ENCODE measurements at regions of chr17 and their contacts with region 1.

Region 1: DNA sequence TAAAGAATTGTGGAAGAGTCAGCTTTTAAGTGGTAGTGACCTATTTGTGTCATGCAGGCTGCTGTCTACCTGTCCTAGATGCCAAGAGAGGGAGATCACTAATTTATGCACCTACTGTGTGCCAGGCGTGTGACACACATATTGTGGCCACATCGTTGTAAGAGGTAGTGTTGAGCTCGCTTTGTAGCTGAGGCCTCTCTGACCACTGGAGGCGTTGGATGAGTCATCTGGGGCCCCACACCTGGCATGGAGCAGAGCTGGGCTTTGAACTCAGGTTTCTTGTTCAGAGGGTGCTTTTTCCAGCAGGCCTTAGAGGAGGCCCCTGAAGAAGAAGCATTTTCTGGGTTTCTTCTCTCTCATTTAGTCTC is 52.3 kb upstream of the LGALS9 start:
- DNase-seq: peak; percentile 57
- ATAC-seq: peak; percentile 94
- H3K4me3 ChIP-seq: no peak overlapping the region
- H3K27ac ChIP-seq: peak overlapping the region; percentile 67
- H3K4me1 ChIP-seq: peaks cover 30% of the 10 kb centered on the region
- H3K27me3 ChIP-seq: no peaks in the 10 kb centered on the region
- CTCF ChIP-seq: peak in 2 of 3 experiments; percentile 13 to 23; a peak in 2 of 6 replicates
- EP300 ChIP-seq: peak; percentile 53 to 82; a peak in 3 of 4 replicates
- POLR2A ChIP-seq: no peak
- RAD21 ChIP-seq: 0 out of 2 replicates have a peak, but pooled peaks have one; percentile 7

Region 2: GRCh38 chr17:27473748-27474609 is 104.7 kb before region 1 on chr17:
- CTCF ChIA-PET with region 1: interaction called, 4 read pairs
- POLR2A ChIA-PET with region 1: interaction called, 3 read pairs
- RAD21 ChIA-PET with region 1: interaction called, 15 read pairs
- SMC1A ChIA-PET with region 1: interaction called, 4 read pairs
- in situ Hi-C with region 1: no loop called
- intact Hi-C with region 1: no loop called
- DNase-seq: peak; percentile 97
- ATAC-seq: peak; percentile 35
- H3K4me3 ChIP-seq: peak overlapping the region; percentile 42
- H3K27ac ChIP-seq: peak overlapping the region; percentile 98
- H3K4me1 ChIP-seq: peaks cover 85% of the 10 kb centered on the region
- H3K27me3 ChIP-seq: no peaks in the 10 kb centered on the region
- CTCF ChIP-seq: no peak
- EP300 ChIP-seq: peak; percentile 68 to 81; a peak in 2 of 4 replicates
- POLR2A ChIP-seq: no peak
- RAD21 ChIP-seq: peak; percentile 17; the same call in 1 of the 2 replicates

Region 3: GRCh38 chr17:27560668-27561067 is 18.0 kb before region 1 on chr17:
- CTCF ChIA-PET with region 1: interaction called, 6 read pairs
- POLR2A ChIA-PET with region 1: no interaction called
- RAD21 ChIA-PET with region 1: interaction called, 6 read pairs
- SMC1A ChIA-PET with region 1: interaction called, 10 read pairs
- in situ Hi-C with region 1: no loop called
- intact Hi-C with region 1: no loop called
- DNase-seq: no peak
- ATAC-seq: no peak
- H3K4me3 ChIP-seq: no peak overlapping the region
- H3K27ac ChIP-seq: no peak overlapping the region
- H3K4me1 ChIP-seq: no peaks in the 10 kb centered on the region; the same call in 1 of the 2 replicates
- H3K27me3 ChIP-seq: no peaks in the 10 kb centered on the region
- CTCF ChIP-seq: no peak
- EP300 ChIP-seq: no peak
- POLR2A ChIP-seq: no peak
- RAD21 ChIP-seq: no peak

Region 4: GRCh38 chr17:27635275-27635823 is 56.6 kb after region 1 on chr17:
- CTCF ChIA-PET with region 1: no interaction called
- POLR2A ChIA-PET with region 1: no interaction called
- RAD21 ChIA-PET with region 1: no interaction called
- SMC1A ChIA-PET with region 1: no interaction called
- in situ Hi-C with region 1: no loop called
- intact Hi-C with region 1: no loop called
- DNase-seq: no peak
- ATAC-seq: peak; percentile 49
- H3K4me3 ChIP-seq: peak overlapping the region; percentile 60
- H3K27ac ChIP-seq: peak overlapping the region; percentile 43
- H3K4me1 ChIP-seq: peaks cover 11% of the 10 kb centered on the region
- H3K27me3 ChIP-seq: no peaks in the 10 kb centered on the region
- CTCF ChIP-seq: no peak
- EP300 ChIP-seq: no peak
- POLR2A ChIP-seq: no peak
- RAD21 ChIP-seq: no peak

Region 5: GRCh38 chr17:28065706-28066105 is 487.0 kb after region 1 on chr17:
- CTCF ChIA-PET with region 1: no interaction called
- POLR2A ChIA-PET with region 1: no interaction called
- RAD21 ChIA-PET with region 1: no interaction called
- SMC1A ChIA-PET with region 1: no interaction called
- in situ Hi-C with region 1: no loop called
- intact Hi-C with region 1: no loop called
- DNase-seq: no peak
- ATAC-seq: no peak
- H3K4me3 ChIP-seq: no peak overlapping the region
- H3K27ac ChIP-seq: no peak overlapping the region
- H3K4me1 ChIP-seq: no peaks in the 10 kb centered on the region
- H3K27me3 ChIP-seq: no peaks in the 10 kb centered on the region
- CTCF ChIP-seq: no peak
- EP300 ChIP-seq: no peak
- POLR2A ChIP-seq: no peak
- RAD21 ChIP-seq: no peak

Measured in GM12878 (cell line).